ENCODE measurements at regions of chr7 and their contacts with region 1.

Region 1: DNA sequence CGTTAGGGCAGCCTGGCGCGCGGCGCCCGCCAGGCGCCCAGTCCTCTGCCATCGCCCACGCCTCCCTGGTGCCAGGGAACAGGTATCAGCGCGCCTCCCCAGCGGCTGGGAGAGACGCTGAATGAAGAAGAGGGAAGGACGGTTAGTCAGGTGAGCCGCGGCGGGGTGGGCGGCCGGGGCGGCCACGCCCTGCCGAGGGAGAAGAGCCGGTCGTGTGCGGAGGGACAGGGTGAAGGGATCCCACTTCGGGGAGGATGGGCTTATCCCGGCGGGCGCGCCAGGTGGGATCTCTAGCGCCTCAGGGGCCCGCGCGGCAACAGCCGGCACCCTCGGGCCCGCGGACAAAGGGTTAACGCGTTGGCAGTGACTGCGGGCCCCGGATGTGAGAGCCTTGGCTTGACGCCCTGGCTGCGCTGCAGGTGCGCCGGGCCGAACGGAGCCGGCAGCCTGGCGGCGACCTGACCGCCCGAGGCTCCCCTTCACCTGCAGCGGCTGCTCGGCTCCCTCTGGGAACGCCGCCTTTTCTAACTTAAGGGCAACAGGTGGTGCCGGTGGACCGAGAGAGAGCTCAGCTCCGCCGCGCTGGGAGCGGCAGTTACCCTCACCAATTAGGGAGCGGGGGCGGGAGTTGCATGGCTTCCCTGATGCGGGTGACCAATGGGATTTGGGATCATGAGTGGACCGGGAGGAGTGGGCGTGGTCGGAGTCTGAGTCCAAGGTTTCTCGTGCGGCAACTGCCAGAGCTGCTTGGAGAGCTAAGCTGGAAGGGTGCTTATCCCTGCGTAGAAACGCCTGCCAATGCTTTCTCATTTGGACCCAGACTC is at the start of gene ARL4A:
- DNase-seq: peak; percentile 100
- H3K4me3 Mint-ChIP-seq: peak within 1 kb of the TSS; percentile 87
- H3K27ac Mint-ChIP-seq: peak within 1 kb of the TSS; percentile 89
- H3K4me1 Mint-ChIP-seq: no peaks in the 10 kb centered on the region
- H3K27me3 Mint-ChIP-seq: no peaks in the 10 kb centered on the region
- CTCF ChIP-seq: peak; percentile 57
- total RNA-seq, gene ARL4A: 30.7 and 42.6 TPM in 2 replicates

Region 2: GRCh38 chr7:12524794-12525386 is 162.2 kb before region 1 on chr7:
- CTCF ChIA-PET with region 1: interaction called, 5 read pairs
- POLR2A ChIA-PET with region 1: interaction called, 3 read pairs
- intact Hi-C with region 1: loop called (anchors 2 kb)
- DNase-seq: peak; percentile 56
- H3K4me3 Mint-ChIP-seq: no peak overlapping the region
- H3K27ac Mint-ChIP-seq: no peak overlapping the region
- H3K4me1 Mint-ChIP-seq: no peaks in the 10 kb centered on the region
- H3K27me3 Mint-ChIP-seq: peaks cover 35% of the 10 kb centered on the region
- CTCF ChIP-seq: peak; percentile 56

Region 3: GRCh38 chr7:12706876-12707536 is 19.9 kb after region 1 on chr7:
- CTCF ChIA-PET with region 1: interaction called, 9 read pairs
- POLR2A ChIA-PET with region 1: interaction called, 159 read pairs
- intact Hi-C with region 1: no loop called
- DNase-seq: peak; percentile 55
- H3K4me3 Mint-ChIP-seq: peak overlapping the region; percentile 0
- H3K27ac Mint-ChIP-seq: peak overlapping the region; percentile 82
- H3K4me1 Mint-ChIP-seq: peaks cover 30% of the 10 kb centered on the region
- H3K27me3 Mint-ChIP-seq: no peaks in the 10 kb centered on the region
- CTCF ChIP-seq: no peak

Region 4: GRCh38 chr7:12923971-12924370 is 236.9 kb after region 1 on chr7:
- CTCF ChIA-PET with region 1: interaction called, 4 read pairs
- POLR2A ChIA-PET with region 1: interaction called, 4 read pairs
- intact Hi-C with region 1: loop called (anchors 1 kb)
- DNase-seq: peak; percentile 72
- H3K4me3 Mint-ChIP-seq: no peak overlapping the region
- H3K27ac Mint-ChIP-seq: peak overlapping the region; percentile 91
- H3K4me1 Mint-ChIP-seq: peaks cover 42% of the 10 kb centered on the region
- H3K27me3 Mint-ChIP-seq: no peaks in the 10 kb centered on the region
- CTCF ChIP-seq: no peak

Region 5: DNA sequence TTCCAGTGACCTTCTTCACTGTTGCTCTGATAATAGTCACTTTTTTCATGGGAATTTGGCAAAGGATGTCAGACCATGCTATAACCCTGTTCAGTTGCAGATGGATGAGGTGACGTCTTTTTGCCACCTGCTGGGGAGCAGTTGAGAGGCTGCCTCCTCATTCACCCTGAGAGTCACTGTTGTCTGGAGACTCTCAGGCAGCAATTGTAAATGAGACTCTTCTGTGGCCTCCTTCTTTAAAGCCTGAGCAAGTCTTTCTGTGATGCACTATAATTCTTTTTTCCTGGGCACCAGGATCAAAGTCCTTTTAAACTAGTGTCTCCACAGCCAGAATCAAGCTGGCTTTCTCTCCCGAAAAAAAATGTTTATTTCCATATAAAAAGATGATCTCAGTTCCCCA is 345.5 kb after region 1 on chr7:
- CTCF ChIA-PET with region 1: interaction called, 15 read pairs
- POLR2A ChIA-PET with region 1: interaction called, 9 read pairs
- intact Hi-C with region 1: no loop called
- DNase-seq: no peak
- H3K4me3 Mint-ChIP-seq: no peak overlapping the region
- H3K27ac Mint-ChIP-seq: no peak overlapping the region
- H3K4me1 Mint-ChIP-seq: peaks cover 21% of the 10 kb centered on the region
- H3K27me3 Mint-ChIP-seq: no peaks in the 10 kb centered on the region
- CTCF ChIP-seq: no peak

Region 6: DNA sequence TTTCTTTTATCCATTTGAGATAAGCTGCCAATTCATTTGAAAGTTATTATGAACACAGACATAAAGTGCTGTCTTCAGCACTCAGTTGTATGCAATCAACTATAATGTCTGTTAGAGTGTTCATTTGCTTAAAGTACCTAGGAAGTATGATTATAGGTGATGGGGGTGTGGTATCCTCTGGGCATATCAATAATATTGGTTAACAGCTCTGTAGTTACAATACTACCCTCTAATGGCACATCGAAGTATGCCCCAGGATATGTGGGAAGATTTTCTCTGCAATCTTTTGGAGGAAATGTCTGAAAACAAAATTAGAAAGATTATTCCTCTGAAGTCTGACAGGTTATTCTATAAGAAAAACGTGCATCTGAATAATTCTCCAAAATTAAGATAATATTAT is 430.0 kb after region 1 on chr7:
- CTCF ChIA-PET with region 1: interaction called, 155 read pairs
- POLR2A ChIA-PET with region 1: interaction called, 61 read pairs
- intact Hi-C with region 1: loop called (anchors 1 kb)
- DNase-seq: peak; percentile 18
- H3K4me3 Mint-ChIP-seq: no peak overlapping the region
- H3K27ac Mint-ChIP-seq: no peak overlapping the region
- H3K4me1 Mint-ChIP-seq: peaks cover 19% of the 10 kb centered on the region
- H3K27me3 Mint-ChIP-seq: no peaks in the 10 kb centered on the region
- CTCF ChIP-seq: peak; percentile 76

Region 7: DNA sequence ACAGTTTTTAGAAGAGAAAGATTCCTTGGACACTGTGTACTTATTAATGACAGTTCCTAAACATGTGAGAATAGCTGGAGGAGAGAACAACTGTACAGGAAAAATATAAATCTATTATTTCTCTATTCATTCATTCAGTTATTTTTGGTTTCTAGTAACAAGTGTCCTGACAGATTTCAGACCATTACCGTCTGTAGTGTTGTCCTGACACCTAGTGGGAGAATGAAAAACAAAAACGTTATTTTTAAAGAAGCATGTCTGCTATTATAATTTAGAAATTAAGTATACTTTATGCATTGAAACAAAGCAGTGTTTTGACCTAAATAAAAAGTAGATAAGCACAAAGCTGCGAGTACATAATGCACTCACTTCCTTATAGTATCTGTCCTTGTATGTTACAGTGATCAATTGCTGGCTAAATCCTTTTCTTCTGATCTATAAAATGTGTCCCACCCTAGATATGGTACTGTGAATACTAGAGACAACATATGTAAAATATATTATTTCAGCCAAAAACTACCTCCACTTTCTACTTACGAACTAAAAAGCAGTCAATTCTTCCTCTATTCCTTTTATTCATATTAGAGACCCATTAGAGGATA is 575.9 kb after region 1 on chr7:
- CTCF ChIA-PET with region 1: interaction called, 139 read pairs
- POLR2A ChIA-PET with region 1: interaction called, 21 read pairs
- intact Hi-C with region 1: loop called (anchors 1 kb)
- DNase-seq: peak; percentile 57
- H3K4me3 Mint-ChIP-seq: no peak overlapping the region
- H3K27ac Mint-ChIP-seq: no peak overlapping the region
- H3K4me1 Mint-ChIP-seq: no peaks in the 10 kb centered on the region
- H3K27me3 Mint-ChIP-seq: no peaks in the 10 kb centered on the region
- CTCF ChIP-seq: peak; percentile 59

Measured in MCF 10A (cell line).